BJ (cell line): ENCODE measurements at regions of chr17 and their contacts with region 1.

Region 1: DNA sequence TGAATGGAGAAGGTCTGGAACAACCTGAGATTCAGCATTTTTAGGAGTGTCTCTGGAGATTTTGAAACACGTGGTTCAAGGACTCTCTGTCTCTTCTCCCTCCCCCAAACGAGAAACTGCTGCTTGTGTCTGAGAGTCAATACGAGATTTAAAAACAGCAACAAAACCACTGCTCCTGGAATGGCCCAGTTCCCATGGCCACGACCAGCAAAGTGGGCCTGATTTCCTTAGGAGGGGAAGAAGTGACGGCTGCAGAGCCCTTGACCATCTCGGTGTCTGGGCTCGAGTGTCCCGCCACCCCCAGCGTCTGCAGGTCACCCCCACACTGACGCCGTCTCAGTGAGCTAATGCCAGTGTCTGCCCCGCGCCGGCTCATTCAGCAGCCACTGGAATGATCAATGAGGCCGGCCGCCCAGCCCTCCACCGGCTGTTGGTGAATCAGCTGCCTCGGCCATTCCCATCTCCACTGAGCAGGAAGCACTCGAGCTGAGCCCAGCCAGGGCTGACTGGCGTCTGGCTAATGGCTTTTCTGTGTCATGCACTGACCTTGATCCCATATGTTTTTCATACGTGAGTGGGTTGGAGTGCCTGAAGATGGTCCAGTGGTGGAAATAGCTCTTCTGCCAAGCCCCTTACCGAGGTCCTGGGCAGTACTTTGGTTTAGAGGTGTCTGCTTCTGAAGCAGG is 151.8 kb downstream of the PITPNC1 start:
- DNase-seq: peak; percentile 70
- H3K4me3 ChIP-seq: peak overlapping the region; percentile 35
- H3K27me3 ChIP-seq: no peaks in the 10 kb centered on the region
- CTCF ChIP-seq: no peak

Region 2: DNA sequence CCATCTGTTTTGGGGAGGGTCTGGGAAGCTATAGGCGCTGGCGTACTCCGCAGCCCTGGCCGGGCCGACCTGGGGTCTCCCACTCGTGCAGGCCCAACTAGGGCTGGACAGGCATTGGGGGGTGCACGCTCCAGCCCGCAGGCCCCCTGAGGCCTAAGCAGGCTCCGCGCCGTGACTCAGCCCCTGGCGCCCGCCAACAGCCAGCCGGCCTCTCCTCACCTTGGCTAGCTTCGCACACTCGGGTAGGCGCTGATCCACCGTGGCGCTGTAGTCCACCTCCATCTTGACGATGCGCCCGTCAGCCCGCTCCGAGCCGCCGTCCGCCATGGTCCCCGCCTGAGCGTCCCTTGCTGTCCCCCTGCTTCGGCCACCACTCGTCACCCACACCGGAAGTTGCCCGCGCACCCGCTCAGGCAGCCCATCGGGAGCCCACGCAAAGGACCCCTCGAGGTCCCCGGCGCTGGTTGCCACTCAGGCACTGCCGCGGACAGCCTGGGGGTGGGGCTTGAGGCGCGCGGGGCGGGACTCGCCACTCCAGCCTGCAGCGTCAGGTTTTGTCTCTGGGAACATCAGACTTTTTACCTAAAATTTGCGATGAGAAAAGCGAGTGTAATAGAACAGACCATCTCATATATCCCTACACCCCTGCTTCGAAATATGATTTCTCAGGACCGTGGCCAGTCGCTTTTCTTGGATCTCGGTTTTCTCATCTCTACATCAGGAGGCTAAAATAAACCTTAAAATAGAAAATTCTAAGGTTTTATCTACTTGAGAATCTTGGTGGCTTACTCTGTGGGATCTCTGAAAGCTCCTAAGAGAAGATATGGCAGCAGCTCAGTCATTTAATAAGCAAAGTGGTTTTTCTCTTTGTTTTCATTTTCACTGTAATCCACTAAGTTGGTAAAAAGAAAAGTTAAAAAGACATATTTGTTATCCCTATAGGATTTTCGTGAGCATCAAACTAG is 162.4 kb before region 1 on chr17 and contains the start of gene PSMD12:
- CTCF ChIA-PET with region 1: no interaction called
- POLR2A ChIA-PET with region 1: interaction called, 10 read pairs
- DNase-seq: peak; percentile 28
- H3K4me3 ChIP-seq: peak within 1 kb of the TSS; percentile 93
- H3K27me3 ChIP-seq: no peaks in the 10 kb centered on the region
- CTCF ChIP-seq: no peak
- polyA plus RNA-seq, gene PSMD12: 12.8 and 25.8 TPM in 2 replicates

Region 3: GRCh38 chr17:67393809-67394397 is 135.0 kb before region 1 on chr17:
- CTCF ChIA-PET with region 1: no interaction called
- POLR2A ChIA-PET with region 1: no interaction called
- DNase-seq: no peak
- H3K4me3 ChIP-seq: no peak overlapping the region
- H3K27me3 ChIP-seq: no peaks in the 10 kb centered on the region
- CTCF ChIP-seq: no peak

Region 4: DNA sequence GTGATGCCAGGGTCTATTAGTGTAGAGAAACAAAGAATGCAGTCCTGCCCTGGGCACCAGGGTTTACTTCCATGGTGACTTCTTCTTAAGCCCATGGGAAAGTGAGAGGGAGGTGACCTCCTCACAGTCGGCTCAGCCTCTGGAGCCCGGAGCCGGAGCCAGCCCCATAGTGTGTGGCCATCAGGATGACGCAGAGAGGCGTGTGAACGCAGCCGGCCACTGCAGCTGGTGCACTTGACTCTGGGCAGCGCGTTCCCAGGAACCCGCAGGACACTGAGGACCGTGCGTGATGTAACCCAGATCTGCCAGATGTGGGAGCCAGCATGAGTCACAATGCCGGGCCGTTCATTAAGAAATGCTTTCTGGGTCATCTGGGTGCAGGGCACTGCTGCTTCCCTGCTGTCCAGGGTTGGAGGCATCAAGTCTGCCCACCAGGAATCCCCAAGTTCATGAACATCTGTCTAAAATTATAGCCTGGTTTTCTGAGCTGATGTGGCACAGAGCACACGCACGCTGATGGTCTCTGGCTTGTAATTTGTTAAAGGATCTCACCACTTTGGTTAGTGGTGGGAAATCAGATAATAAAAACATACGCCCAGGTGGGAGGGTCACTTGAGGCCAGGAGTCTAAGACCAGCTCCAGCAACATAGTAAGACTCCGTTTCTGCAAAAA is 37.7 kb before region 1 on chr17:
- CTCF ChIA-PET with region 1: no interaction called
- POLR2A ChIA-PET with region 1: no interaction called
- DNase-seq: peak; percentile 97
- H3K4me3 ChIP-seq: peak overlapping the region; percentile 31
- H3K27me3 ChIP-seq: no peaks in the 10 kb centered on the region
- CTCF ChIP-seq: no peak

Region 5: DNA sequence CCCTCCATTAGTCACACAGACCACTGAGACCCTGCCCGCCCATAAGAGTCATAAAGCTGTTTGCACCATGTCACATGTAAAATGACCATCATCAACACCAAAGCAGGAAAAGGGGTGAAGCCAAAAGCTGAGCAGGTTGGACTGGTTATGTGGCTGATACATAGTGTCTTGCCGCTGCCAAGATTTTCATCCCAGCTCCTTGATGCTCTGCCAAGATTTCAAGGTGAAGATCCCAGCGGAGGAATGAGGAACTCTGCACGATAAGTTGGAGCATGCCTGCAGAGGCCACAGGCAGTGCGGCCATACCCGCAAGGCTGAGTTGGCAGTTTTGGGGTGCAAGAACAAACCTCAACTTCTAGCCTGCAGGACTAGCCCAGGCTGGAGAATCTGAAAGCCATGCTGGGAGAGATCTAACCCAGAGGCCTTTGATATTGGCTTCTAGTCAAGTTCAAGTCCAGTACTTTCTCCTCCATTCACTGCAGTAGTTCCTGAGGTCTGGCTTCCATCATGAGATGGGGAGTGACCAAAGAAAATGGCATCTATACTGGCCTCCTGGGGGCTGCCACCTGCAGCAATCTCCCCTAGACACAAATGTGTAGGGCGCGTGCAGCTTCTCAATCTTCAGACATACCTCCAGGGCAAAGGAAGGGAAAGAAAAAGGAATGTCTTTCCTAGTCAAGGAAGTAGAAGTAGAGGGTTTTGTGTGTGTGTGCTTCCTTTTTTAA is 109.2 kb after region 1 on chr17:
- CTCF ChIA-PET with region 1: no interaction called
- POLR2A ChIA-PET with region 1: no interaction called
- DNase-seq: no peak
- H3K4me3 ChIP-seq: no peak overlapping the region
- H3K27me3 ChIP-seq: no peaks in the 10 kb centered on the region
- CTCF ChIP-seq: no peak